Brain microvascular endothelial cell (primary cell): ENCODE measurements at regions of chr1 and their contacts with region 1.

Region 1: GRCh38 chr1:43227143-43227764 is 42.5 kb upstream of the TMEM125 start:
- DNase-seq: peak; percentile 68
- H3K4me3 ChIP-seq: no peak overlapping the region
- H3K27ac ChIP-seq: no peak overlapping the region
- H3K27me3 ChIP-seq: no peaks in the 10 kb centered on the region
- CTCF ChIP-seq: peak; percentile 95

Region 2: GRCh38 chr1:43348809-43349583 is 121.7 kb after region 1 on chr1:
- in situ Hi-C with region 1: no loop called
- DNase-seq: peak; percentile 46
- H3K4me3 ChIP-seq: peak overlapping the region; percentile 60
- H3K27ac ChIP-seq: peak overlapping the region; percentile 41
- H3K27me3 ChIP-seq: no peaks in the 10 kb centered on the region
- CTCF ChIP-seq: no peak

Region 3: DNA sequence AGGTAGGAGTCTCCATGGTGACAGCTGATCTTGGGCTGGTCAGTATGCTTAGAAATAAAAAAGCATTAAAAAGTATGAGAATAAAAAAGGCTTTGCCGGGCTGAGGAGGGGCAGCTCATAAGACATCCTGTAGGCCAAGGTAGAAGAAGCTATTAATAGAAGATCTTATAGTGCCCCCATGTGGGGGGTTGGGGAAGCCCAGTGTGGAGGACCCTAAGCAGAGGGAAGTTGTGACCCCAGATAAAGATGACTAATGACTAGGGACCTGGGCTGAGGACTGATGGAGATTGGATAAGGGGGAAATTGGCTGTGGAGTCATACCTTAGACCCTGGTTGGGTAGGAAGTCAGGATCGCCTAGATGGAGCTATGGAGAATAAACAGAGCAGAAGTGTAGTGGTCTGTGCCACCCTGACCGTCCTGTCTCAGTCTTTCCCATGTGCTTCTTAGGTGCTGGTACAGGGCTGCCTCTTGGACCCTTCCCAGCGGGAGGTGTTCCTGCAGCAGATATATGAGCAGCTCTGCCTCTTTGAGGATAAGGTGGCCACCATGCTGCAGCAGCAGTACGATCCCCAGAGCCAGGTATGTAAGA is 187.5 kb after region 1 on chr1:
- in situ Hi-C with region 1: loop called (anchors 25 kb)
- DNase-seq: peak; percentile 63
- H3K4me3 ChIP-seq: no peak overlapping the region
- H3K27ac ChIP-seq: no peak overlapping the region
- H3K27me3 ChIP-seq: no peaks in the 10 kb centered on the region
- CTCF ChIP-seq: peak; percentile 77

Region 4: DNA sequence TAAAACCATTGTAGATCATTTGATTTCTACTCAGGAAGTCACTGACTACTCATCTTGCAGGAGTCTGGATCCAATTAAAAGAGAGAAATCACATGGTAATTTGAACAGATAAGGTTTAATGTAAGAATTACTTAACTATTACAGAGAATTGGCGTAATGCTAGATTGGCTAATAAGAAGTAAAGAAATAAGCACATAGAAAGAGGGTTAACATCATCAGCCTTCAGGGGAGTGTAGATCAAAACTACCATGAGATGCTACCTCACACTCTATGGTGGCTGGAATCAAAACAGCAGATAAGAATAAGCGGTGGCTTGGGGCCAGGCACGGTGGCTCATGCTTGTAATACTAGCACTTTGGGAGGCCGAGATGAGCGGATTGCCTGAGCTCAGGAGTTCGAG is 491.8 kb after region 1 on chr1:
- in situ Hi-C with region 1: no loop called
- DNase-seq: no peak
- H3K4me3 ChIP-seq: no peak overlapping the region
- H3K27ac ChIP-seq: no peak overlapping the region
- H3K27me3 ChIP-seq: no peaks in the 10 kb centered on the region
- CTCF ChIP-seq: no peak